IMR-90 (cell line): ENCODE measurements at regions of chr18 and their contacts with region 1.

Region 1: DNA sequence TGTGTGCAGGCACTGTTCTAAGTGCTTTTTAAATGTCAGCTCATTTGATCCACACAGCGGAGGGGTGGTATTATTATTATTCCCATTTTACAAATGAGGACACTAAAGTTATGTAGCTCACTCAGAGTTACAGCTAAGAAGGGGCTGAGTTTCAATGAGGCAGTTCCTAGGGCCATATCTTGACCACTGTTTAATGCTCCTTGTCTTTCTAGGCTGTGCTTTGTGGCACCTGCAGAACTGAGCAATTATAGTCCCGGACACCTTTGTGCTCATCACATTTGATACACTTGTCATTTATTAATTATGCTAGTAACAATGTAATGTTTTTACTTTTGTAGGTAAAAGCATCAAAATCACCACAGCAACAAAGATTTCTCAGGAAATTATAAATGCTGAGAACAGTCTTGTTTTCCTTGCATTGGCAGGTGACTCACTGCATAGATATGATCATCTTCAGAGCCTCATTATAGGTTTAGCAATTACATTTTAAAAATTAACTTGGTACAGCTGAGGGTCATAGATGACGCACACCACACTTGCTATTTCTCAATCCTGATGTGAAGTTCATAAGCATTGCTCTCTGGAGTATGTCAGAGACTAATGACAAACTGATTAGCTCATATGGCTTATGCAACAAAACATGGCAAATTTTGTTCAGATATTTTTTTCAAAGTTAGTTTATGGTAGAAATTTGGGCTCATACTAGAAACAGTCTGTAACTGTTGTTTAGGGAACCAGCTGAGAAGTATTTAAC is 366.8 kb downstream of the TGIF1 start:
- DNase-seq: peak; percentile 99
- ATAC-seq: peak; percentile 87
- H3K4me3 ChIP-seq: no peak overlapping the region
- H3K27ac ChIP-seq: peak overlapping the region; percentile 92
- H3K4me1 ChIP-seq: peaks cover 15% of the 10 kb centered on the region
- H3K27me3 ChIP-seq: no peaks in the 10 kb centered on the region
- CTCF ChIP-seq: no peak
- POLR2A ChIP-seq: no peak
- RAD21 ChIP-seq: no peak

Region 2: DNA sequence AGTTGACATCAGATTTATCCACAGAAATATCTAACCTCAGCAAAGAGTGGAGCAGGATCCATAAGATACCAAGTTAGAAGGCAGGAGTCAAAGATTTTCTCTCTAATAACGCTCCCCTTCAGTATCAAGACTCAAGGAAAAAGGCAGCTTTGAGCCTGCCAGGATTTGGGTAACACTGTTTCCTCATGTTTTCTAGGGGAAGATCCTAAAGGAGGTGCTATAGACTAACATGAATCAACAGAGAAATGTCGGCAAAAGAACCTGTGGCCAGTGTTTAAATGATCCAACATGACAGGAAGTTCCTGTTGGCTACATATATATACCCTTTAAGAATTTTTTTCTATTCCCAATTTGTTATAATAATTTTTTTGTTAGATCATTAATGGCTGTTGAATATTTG is 35.5 kb after region 1 on chr18:
- CTCF ChIA-PET with region 1: interaction called, 3 read pairs
- POLR2A ChIA-PET with region 1: no interaction called
- dilution Hi-C with region 1: no loop called
- in situ Hi-C with region 1: no loop called
- intact Hi-C with region 1: loop called (anchors 5 kb)
- DNase-seq: no peak
- ATAC-seq: no peak
- H3K4me3 ChIP-seq: no peak overlapping the region
- H3K27ac ChIP-seq: no peak overlapping the region
- H3K4me1 ChIP-seq: peaks cover 2% of the 10 kb centered on the region; the same call in 1 of the 2 replicates
- H3K27me3 ChIP-seq: no peaks in the 10 kb centered on the region; the same call in 1 of the 2 replicates
- CTCF ChIP-seq: no peak
- POLR2A ChIP-seq: no peak
- RAD21 ChIP-seq: no peak

Region 3: GRCh38 chr18:3923750-3924149 is 107.0 kb after region 1 on chr18:
- CTCF ChIA-PET with region 1: no interaction called
- POLR2A ChIA-PET with region 1: no interaction called
- dilution Hi-C with region 1: no loop called
- in situ Hi-C with region 1: no loop called
- intact Hi-C with region 1: no loop called
- DNase-seq: peak; percentile 93
- ATAC-seq: peak; percentile 89
- H3K4me3 ChIP-seq: no peak overlapping the region
- H3K27ac ChIP-seq: no peak overlapping the region
- H3K4me1 ChIP-seq: peaks cover 14% of the 10 kb centered on the region
- H3K27me3 ChIP-seq: no peaks in the 10 kb centered on the region; the same call in 1 of the 2 replicates
- CTCF ChIP-seq: no peak
- POLR2A ChIP-seq: no peak
- RAD21 ChIP-seq: no peak

Region 4: DNA sequence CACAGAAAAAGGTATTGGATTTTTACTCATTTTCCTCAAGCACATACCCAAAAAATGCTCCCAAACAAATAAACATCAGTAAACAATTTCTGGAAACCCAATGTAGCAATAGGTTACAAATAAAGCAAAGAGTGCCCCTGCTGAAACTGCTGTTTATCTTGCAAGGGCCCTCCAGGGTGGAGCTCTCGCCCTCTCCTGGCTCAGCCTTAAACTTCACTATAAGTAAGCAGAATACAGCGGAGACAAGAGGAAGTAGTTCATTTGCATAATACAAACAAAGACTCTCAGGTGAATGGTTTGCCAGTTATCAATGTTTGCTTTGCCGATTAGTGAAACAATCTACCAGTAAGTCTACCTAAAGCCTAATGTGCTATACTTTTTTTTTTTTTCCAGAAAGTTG is 200.7 kb after region 1 on chr18:
- CTCF ChIA-PET with region 1: no interaction called
- POLR2A ChIA-PET with region 1: no interaction called
- dilution Hi-C with region 1: no loop called
- in situ Hi-C with region 1: no loop called
- intact Hi-C with region 1: no loop called
- DNase-seq: peak; percentile 2
- ATAC-seq: no peak
- H3K4me3 ChIP-seq: no peak overlapping the region
- H3K27ac ChIP-seq: no peak overlapping the region
- H3K4me1 ChIP-seq: 0 out of 2 replicates have a peak, but pooled peaks cover 2% of the 10 kb centered on the region
- H3K27me3 ChIP-seq: peaks cover 5% of the 10 kb centered on the region
- CTCF ChIP-seq: no peak
- POLR2A ChIP-seq: no peak
- RAD21 ChIP-seq: no peak